CD4-positive, alpha-beta memory T cell (primary cell): ENCODE measurements at regions of chr5 and their contacts with region 1.

Region 1: DNA sequence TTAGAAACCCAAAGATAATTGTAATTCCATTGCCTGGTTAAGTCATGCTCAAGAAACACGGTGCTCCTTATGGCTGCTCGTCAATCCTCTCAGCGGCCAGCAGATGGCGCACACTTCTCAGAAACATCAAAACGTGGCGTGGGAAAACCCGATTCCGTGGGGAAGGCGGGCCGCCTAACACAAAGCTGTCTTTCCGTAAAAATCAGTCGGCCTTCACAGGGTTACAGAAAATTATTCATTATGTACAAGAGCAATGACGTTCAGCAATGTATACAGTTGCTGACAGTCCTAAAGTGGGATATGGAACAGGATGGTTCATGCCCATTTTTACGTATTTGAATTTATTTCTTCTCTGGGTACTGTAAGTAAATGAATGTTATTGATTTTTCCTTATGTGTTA is 83.5 kb downstream of the PDE4D start:
- DNase-seq: peak; percentile 32 to 44 (median 40)
- H3K4me3 ChIP-seq: no peak overlapping the region
- H3K4me3 Mint-ChIP-seq: peak overlapping the region in 3 of 8 donors; percentile 14 to 78 (median 32)
- H3K27ac ChIP-seq: no peak overlapping the region
- H3K27ac Mint-ChIP-seq: no peak overlapping the region
- H3K4me1 ChIP-seq: no peaks in the 10 kb centered on the region
- H3K4me1 Mint-ChIP-seq: peaks cover 2 to 4% (median 3%) of the 10 kb centered on the region in 4 donors
- H3K27me3 ChIP-seq: peaks cover 6% of the 10 kb centered on the region
- H3K27me3 Mint-ChIP-seq: peaks cover 6 to 18% of the 10 kb centered on the region in 2 donors

Region 2: GRCh38 chr5:59790399-59791125 is 19.5 kb before region 1 on chr5:
- CTCF ChIA-PET with region 1: interaction called, 18 read pairs
- POLR2A ChIA-PET with region 1: no interaction called
- intact Hi-C with region 1: no loop called
- DNase-seq: no peak
- H3K4me3 ChIP-seq: no peak overlapping the region
- H3K4me3 Mint-ChIP-seq: peak overlapping the region; percentile 23 to 85 (median 58)
- H3K27ac ChIP-seq: no peak overlapping the region
- H3K27ac Mint-ChIP-seq: peak overlapping the region in 4 of 7 donors; percentile 1 to 75 (median 43)
- H3K4me1 ChIP-seq: no peaks in the 10 kb centered on the region
- H3K4me1 Mint-ChIP-seq: peaks cover 3 to 13% (median 8%) of the 10 kb centered on the region in 4 donors
- H3K27me3 ChIP-seq: no peaks in the 10 kb centered on the region
- H3K27me3 Mint-ChIP-seq: peaks cover 8 to 17% of the 10 kb centered on the region in 2 donors

Region 3: DNA sequence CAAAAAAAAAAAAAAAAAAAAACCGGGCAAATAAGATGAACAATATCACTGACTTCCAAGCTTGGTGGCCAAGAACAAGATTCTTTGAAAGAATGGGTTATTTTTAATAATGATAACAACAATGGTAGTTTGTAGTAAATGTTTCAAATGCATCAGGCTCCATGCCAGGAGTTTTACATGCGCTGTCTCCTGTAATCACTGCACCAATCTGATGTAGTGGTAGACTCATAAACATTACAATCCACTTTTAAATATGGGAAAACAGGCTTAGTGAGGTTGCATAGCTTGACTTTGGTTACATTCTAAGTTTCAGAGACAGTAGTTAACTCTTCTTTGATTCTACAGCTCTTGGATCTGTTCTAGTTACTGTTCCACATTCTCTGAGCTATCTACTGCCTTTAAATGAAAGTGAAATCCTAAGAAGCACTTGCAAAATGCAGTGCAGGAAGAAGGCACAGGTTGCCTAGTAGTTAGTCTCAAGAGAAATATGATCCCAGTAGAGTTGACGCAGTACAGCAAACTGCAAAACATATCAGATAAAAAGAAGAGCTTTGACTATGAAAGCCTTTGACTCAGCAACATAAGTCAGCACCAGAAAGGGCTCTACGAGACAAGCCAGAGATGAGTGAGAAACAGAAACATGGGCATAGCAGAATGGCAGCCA is 21.4 kb after region 1 on chr5:
- CTCF ChIA-PET with region 1: interaction called, 12 read pairs
- POLR2A ChIA-PET with region 1: no interaction called
- intact Hi-C with region 1: no loop called
- DNase-seq: no peak
- H3K4me3 ChIP-seq: no peak overlapping the region
- H3K4me3 Mint-ChIP-seq: no peak overlapping the region
- H3K27ac ChIP-seq: no peak overlapping the region
- H3K27ac Mint-ChIP-seq: no peak overlapping the region
- H3K4me1 ChIP-seq: no peaks in the 10 kb centered on the region
- H3K4me1 Mint-ChIP-seq: peaks cover 0 to 2% (median 0%) of the 10 kb centered on the region in 4 donors
- H3K27me3 ChIP-seq: no peaks in the 10 kb centered on the region
- H3K27me3 Mint-ChIP-seq: no peaks in the 10 kb centered on the region

Region 4: GRCh38 chr5:59845730-59846129 is 35.7 kb after region 1 on chr5:
- CTCF ChIA-PET with region 1: no interaction called
- POLR2A ChIA-PET with region 1: no interaction called
- intact Hi-C with region 1: no loop called
- DNase-seq: no peak
- H3K4me3 ChIP-seq: no peak overlapping the region
- H3K4me3 Mint-ChIP-seq: no peak overlapping the region
- H3K27ac ChIP-seq: no peak overlapping the region
- H3K27ac Mint-ChIP-seq: no peak overlapping the region
- H3K4me1 ChIP-seq: no peaks in the 10 kb centered on the region
- H3K4me1 Mint-ChIP-seq: no peaks in the 10 kb centered on the region
- H3K27me3 ChIP-seq: no peaks in the 10 kb centered on the region
- H3K27me3 Mint-ChIP-seq: peaks cover 0 to 7% of the 10 kb centered on the region in 2 donors

Region 5: GRCh38 chr5:59959330-59959729 is 149.3 kb after region 1 on chr5:
- CTCF ChIA-PET with region 1: no interaction called
- POLR2A ChIA-PET with region 1: no interaction called
- intact Hi-C with region 1: no loop called
- DNase-seq: no peak
- H3K4me3 ChIP-seq: no peak overlapping the region
- H3K4me3 Mint-ChIP-seq: no peak overlapping the region
- H3K27ac ChIP-seq: no peak overlapping the region
- H3K27ac Mint-ChIP-seq: no peak overlapping the region
- H3K4me1 ChIP-seq: no peaks in the 10 kb centered on the region
- H3K4me1 Mint-ChIP-seq: no peaks in the 10 kb centered on the region
- H3K27me3 ChIP-seq: no peaks in the 10 kb centered on the region
- H3K27me3 Mint-ChIP-seq: no peaks in the 10 kb centered on the region